ENCODE measurements at regions of chr2 and their contacts with region 1.

Region 1: GRCh38 chr2:127721311-127721977 is 20.1 kb downstream of the SFT2D3 start:
- DNase-seq: no peak
- H3K4me3 ChIP-seq: no peak overlapping the region
- H3K27ac ChIP-seq: no peak overlapping the region
- H3K4me1 ChIP-seq: no peaks in the 10 kb centered on the region
- H3K27me3 ChIP-seq: no peaks in the 10 kb centered on the region
- CTCF ChIP-seq: no peak
- EP300 ChIP-seq: no peak
- POLR2A ChIP-seq: no peak

Region 2: DNA sequence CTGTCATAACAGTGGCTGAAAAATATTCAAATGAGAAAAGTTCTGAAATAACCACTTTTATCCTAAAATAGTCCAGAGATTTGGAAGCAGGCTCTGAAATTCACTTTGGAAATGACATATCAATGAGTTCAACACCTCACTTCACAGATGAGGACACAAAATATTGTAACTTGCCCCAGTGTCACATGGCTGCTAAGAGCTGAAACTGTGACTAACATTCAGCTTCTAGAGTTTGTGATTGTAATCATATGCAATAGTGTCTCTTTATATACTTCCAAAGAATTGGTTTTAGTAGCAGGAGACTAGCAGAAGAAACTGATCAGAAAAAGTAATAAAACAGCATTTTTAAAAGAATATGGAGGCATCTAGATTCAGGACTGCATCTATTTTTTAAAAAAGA is 31.9 kb after region 1 on chr2:
- in situ Hi-C with region 1: no loop called
- intact Hi-C with region 1: loop called (anchors 1 kb)
- DNase-seq: no peak
- H3K4me3 ChIP-seq: no peak overlapping the region
- H3K27ac ChIP-seq: no peak overlapping the region
- H3K4me1 ChIP-seq: peaks cover 0 to 4% (median 1%) of the 10 kb centered on the region in 4 donors
- H3K27me3 ChIP-seq: no peaks in the 10 kb centered on the region
- CTCF ChIP-seq: no peak
- EP300 ChIP-seq: no peak
- POLR2A ChIP-seq: no peak

Region 3: GRCh38 chr2:128008074-128008672 is 286.7 kb after region 1 on chr2:
- in situ Hi-C with region 1: no loop called
- intact Hi-C with region 1: no loop called
- DNase-seq: no peak
- H3K4me3 ChIP-seq: no peak overlapping the region
- H3K27ac ChIP-seq: no peak overlapping the region
- H3K4me1 ChIP-seq: no peaks in the 10 kb centered on the region
- H3K27me3 ChIP-seq: no peaks in the 10 kb centered on the region
- CTCF ChIP-seq: no peak
- EP300 ChIP-seq: no peak
- POLR2A ChIP-seq: no peak